ENCODE measurements at regions of chr12 and their contacts with region 1.

Region 1: DNA sequence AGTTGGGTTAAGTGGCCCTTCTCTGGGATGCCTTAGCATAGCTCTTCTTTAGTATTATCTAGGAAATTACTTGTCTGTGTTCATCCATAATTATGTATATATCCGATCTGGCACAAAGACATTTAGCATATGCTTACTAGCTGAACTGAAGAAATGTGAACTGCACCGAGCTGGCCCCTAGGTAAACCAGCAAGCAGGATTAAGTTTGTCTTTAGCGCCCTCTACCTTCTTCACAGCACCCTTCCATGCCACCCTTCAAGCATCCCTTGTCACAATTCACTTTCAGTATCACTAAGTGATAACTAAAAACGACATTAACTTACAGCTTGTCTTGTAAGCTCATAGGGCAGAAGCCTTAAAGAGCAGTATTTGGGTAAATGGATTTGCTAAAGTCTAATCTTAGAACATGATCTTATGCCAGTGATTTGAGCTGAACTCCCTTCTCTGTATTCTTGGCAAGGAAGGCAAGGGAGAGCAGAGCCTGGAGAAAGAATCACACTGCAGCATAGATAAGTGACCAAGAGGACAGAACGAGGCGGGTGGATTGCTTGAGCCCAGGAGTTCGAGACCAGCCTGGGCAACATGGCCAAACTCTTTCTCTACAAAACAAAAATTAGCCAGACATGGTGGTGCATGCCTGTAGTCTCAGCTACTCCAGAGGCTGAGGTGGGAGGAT is 2.6 kb upstream of the HAL start:
- DNase-seq: peak; percentile 64
- H3K4me3 Mint-ChIP-seq: no peak overlapping the region
- H3K27ac Mint-ChIP-seq: no peak overlapping the region
- H3K4me1 Mint-ChIP-seq: peaks cover 15% of the 10 kb centered on the region
- H3K27me3 Mint-ChIP-seq: no peaks in the 10 kb centered on the region

Region 2: DNA sequence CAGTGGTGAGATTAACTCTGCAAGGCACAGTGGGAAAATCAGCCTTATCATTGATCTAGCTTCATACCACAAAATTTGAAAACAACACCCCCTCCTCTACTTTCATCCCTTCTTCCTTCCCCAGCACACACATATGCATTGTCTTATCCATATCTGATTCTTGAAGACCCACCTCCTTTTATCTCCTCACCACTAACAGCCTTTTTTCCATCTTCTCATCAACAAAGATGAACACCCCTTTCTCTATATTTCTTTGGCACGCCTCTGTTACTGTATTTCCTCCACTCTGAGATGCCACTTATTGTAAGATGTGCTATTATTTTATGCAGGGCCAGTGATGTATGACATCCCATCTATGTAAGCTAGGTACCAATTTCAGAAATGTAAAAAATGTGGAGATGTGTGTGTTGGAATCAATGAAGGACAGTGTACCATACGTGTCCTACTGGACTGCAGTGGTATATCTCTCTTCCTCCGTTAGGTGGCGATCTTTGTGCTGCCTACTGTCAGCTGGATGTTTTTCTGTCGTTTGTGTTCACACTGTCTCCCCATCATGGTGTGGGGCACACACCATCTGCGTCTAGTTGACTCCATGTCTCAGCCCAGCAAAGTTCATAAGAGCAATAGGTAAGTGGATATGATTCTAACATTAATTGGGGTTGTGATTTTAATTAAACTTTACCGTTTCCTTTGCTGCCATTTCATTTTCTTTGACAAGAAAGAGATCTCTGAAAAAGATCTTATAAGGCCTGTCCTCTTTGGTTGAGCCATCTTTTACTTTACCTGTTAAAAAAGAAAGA is 80.4 kb before region 1 on chr12:
- CTCF ChIA-PET with region 1: interaction called, 74 read pairs
- POLR2A ChIA-PET with region 1: interaction called, 9 read pairs
- DNase-seq: peak; percentile 44
- H3K4me3 Mint-ChIP-seq: no peak overlapping the region
- H3K27ac Mint-ChIP-seq: no peak overlapping the region
- H3K4me1 Mint-ChIP-seq: no peaks in the 10 kb centered on the region
- H3K27me3 Mint-ChIP-seq: peaks cover 15% of the 10 kb centered on the region

Region 3: DNA sequence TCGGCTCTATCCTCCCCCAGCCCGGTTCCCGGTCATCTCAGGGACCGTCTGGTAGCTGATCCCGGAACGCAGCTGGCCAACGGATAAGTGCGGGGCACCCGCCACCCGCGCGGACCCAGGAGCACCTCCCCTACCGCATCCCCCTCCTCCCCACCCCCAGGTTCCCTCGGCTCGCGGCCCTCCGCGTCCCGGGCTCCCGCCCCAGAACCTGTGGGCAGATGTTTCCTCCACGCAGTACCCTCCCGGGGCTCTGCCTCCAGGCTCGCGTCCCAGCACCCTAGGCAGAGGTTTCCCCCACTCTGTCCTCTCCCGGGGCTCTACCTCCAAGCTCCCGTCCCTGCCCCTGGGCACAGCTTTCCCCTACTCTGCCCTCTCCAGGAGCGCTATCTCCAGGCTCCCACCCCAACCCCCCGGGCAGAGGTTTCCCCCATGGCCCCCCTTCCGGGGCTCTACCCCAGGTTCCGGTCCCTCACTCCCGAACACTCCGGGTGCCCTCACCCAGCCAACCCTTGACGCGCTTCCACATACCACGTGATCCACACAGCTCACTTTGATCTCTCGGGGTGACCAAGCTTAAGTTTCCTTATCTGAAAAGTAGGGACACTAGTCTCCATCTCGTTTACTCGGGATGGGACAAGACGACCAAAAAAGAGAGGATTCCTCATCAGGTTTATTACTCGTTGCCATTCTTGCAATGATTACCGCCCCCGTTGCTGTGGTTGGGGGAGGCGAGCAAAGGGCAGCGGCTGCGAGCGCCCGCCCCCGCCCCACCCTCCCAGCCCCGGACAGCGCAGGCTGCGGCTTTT is 56.0 kb before region 1 on chr12 and contains the start of gene CCDC38:
- CTCF ChIA-PET with region 1: interaction called, 34 read pairs
- POLR2A ChIA-PET with region 1: interaction called, 3 read pairs
- DNase-seq: peak; percentile 86
- H3K4me3 Mint-ChIP-seq: peak within 1 kb of the TSS; percentile 95
- H3K27ac Mint-ChIP-seq: peak within 1 kb of the TSS; percentile 85
- H3K4me1 Mint-ChIP-seq: peaks cover 12% of the 10 kb centered on the region
- H3K27me3 Mint-ChIP-seq: peaks cover 6% of the 10 kb centered on the region
- total RNA-seq, gene CCDC38: not detected

Region 4: DNA sequence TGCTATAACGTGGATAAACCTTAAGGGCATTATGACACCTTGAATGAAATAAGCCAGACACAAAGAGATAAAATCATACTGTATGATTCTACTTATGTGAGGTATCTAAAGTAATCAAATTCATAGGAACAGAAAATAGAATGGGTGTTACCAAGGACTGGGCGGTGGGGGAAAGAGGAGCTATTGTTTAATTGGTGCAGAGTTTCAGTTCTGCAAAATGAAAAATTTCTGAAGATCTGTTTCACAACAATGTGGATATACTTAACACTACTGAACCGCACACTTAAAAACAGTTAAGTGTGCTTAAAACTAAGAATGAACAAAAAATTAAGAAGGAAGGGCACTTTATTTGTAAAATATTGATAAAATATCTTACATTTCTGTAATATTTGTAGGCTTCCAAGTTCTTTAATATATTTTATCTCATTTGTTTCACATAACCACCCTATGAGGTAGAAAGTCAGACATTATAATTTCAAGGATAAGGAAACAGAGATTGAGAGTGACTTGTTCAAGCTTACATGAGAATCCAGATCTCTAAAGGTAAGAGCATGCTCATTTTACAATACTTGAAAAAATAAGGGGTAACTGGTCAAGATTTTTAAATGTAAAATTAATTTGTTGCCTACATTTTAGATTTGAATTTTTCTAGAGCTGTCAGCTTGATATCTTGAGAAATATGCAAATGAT is 21.7 kb after region 1 on chr12:
- CTCF ChIA-PET with region 1: interaction called, 13 read pairs
- POLR2A ChIA-PET with region 1: no interaction called
- DNase-seq: no peak
- H3K4me3 Mint-ChIP-seq: no peak overlapping the region
- H3K27ac Mint-ChIP-seq: no peak overlapping the region
- H3K4me1 Mint-ChIP-seq: no peaks in the 10 kb centered on the region
- H3K27me3 Mint-ChIP-seq: no peaks in the 10 kb centered on the region